PC-9 (cell line): ENCODE measurements at regions of chr9 and their contacts with region 1.

Region 1: GRCh38 chr9:2281031-2281802 is 266.1 kb downstream of the SMARCA2 start:
- DNase-seq: peak; percentile 75 to 83
- H3K4me3 ChIP-seq: no peak overlapping the region
- H3K27ac ChIP-seq: peak overlapping the region; percentile 49
- H3K4me1 ChIP-seq: peaks cover 18% of the 10 kb centered on the region
- H3K27me3 ChIP-seq: no peaks in the 10 kb centered on the region
- CTCF ChIP-seq: no peak

Region 2: GRCh38 chr9:2158111-2158610 is 123.1 kb before region 1 on chr9:
- CTCF ChIA-PET with region 1: no interaction called
- POLR2A ChIA-PET with region 1: no interaction called
- intact Hi-C with region 1: loop called (anchors 5 kb)
- DNase-seq: peak; percentile 25 to 62
- H3K4me3 ChIP-seq: peak overlapping the region; percentile 65
- H3K27ac ChIP-seq: no peak overlapping the region
- H3K4me1 ChIP-seq: peaks cover 7% of the 10 kb centered on the region; the same call in 1 of the 2 replicates
- H3K27me3 ChIP-seq: no peaks in the 10 kb centered on the region
- CTCF ChIP-seq: no peak; the same call in 1 of the 2 replicates

Region 3: GRCh38 chr9:2291980-2292665 is 10.9 kb after region 1 on chr9:
- CTCF ChIA-PET with region 1: no interaction called
- POLR2A ChIA-PET with region 1: no interaction called
- intact Hi-C with region 1: loop called (anchors 1 kb)
- DNase-seq: peak; percentile 49 to 92
- H3K4me3 ChIP-seq: peak overlapping the region; percentile 34; the same call in 1 of the 2 replicates
- H3K27ac ChIP-seq: peak overlapping the region; percentile 97
- H3K4me1 ChIP-seq: peaks cover 27% of the 10 kb centered on the region
- H3K27me3 ChIP-seq: no peaks in the 10 kb centered on the region
- CTCF ChIP-seq: no peak

Region 4: DNA sequence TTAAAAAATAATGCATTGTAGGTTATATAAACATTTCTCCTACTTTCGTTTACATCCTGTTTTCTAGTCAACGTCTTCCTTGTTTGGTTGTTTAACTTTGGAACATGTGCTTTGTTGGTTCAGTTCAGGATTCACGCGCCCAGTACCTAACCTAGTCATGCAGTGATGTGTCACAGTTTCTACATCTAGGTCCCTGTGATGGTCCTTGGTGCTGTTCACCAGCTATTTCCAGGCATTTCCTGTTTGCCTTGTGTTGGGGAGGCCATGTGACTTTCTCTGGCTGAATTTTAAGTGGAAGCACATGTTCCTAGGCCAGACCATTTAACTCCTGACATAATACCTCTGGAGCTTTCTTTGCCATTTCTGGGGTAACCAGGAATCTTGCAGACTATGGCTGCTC is 26.3 kb after region 1 on chr9:
- CTCF ChIA-PET with region 1: no interaction called
- POLR2A ChIA-PET with region 1: no interaction called
- intact Hi-C with region 1: no loop called
- DNase-seq: peak in 1 of 2 experiments; percentile 32
- H3K4me3 ChIP-seq: no peak overlapping the region
- H3K27ac ChIP-seq: no peak overlapping the region
- H3K4me1 ChIP-seq: no peaks in the 10 kb centered on the region
- H3K27me3 ChIP-seq: no peaks in the 10 kb centered on the region
- CTCF ChIP-seq: no peak

Region 5: DNA sequence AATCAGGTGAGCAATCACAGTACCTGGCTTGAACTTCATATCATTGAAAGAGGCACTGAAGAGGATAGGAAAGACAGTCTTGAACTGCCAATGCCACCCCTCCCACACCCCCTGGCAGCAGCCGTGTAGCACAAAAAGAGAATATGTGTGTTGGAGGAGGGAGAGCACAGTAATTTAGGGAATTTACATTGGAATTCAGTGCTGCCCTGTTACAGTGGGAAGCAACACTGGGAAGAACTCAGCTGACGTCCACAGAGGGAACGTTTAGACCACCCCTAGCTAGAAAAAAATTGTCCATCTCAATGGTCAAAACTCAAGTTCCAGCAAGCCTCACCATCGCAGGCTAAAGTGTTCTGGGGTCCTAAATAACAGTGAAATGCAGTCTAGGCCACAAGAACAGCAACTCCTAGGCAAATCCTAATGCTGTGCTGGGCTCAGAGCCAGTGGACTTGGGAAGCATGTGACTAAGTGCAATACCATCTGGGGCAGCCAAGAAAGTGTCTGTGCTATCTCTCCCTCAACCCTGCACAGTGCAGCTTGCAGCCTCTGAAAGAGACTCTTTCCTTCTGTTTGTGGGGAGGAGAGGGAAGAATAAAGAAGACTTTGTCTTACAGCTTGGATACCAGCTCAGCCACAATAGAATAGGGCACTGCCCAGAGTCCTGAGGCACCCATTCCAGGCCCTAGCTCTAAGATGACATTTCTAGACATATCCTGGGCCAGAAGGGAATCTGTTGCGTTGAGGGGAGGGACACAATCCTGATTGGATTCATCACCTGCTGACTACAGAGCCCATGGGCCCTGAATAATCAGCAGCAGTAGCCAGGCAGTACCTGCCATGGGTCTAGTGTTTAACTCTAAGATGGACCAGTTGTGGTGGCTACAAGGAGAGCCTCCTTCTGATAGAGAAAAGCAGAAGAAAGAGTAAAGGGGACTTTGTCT is 278.3 kb after region 1 on chr9:
- CTCF ChIA-PET with region 1: no interaction called
- POLR2A ChIA-PET with region 1: no interaction called
- intact Hi-C with region 1: loop called (anchors 5 kb)
- DNase-seq: peak; percentile 47 to 48
- H3K4me3 ChIP-seq: no peak overlapping the region
- H3K27ac ChIP-seq: no peak overlapping the region
- H3K4me1 ChIP-seq: peaks cover 8% of the 10 kb centered on the region; the same call in 1 of the 2 replicates
- H3K27me3 ChIP-seq: no peaks in the 10 kb centered on the region
- CTCF ChIP-seq: no peak

Region 6: DNA sequence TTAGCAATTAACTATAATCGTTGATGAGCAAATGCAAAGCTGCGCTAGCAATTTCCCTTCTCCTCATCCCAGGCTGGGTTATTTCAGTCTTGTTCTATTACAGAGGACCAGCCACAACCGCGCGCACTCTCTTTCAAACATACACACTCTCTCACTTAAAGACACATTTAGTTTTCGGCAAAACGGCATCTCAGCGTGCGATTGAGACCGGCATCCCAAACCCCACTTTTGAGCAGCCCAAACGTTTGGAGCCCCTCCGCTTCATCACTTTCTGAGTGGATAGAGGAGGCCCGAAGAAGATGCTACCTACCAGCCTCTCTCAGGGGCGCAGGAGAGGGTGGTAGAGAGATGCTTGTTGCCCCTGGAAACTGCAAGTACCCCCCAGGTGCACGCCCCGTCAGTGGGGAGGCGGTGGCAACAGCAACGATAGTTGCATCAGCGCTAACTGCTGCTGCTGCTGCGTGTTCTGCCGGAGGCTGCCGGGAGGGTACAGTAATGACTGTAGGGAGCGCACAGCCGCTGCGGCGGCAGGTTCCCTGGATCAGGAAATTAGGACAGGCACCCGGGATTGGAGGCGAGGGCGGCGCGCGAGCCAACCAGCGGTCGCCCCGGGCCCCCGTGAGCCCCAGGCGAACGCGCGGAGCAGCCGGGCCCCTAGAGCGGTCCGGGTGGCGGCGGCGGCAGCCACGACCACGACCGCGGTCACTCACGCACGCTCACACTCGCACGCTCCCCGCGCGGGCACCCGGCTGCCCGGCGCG is 339.9 kb after region 1 on chr9:
- CTCF ChIA-PET with region 1: no interaction called
- POLR2A ChIA-PET with region 1: no interaction called
- intact Hi-C with region 1: loop called (anchors 5 kb)
- DNase-seq: peak; percentile 64 to 71
- H3K4me3 ChIP-seq: peak overlapping the region; percentile 74
- H3K27ac ChIP-seq: peak overlapping the region; percentile 81
- H3K4me1 ChIP-seq: 0 out of 2 replicates have a peak, but pooled peaks cover 8% of the 10 kb centered on the region
- H3K27me3 ChIP-seq: no peaks in the 10 kb centered on the region
- CTCF ChIP-seq: no peak